ENCODE measurements at regions of chr3 and their contacts with region 1.

Region 1: DNA sequence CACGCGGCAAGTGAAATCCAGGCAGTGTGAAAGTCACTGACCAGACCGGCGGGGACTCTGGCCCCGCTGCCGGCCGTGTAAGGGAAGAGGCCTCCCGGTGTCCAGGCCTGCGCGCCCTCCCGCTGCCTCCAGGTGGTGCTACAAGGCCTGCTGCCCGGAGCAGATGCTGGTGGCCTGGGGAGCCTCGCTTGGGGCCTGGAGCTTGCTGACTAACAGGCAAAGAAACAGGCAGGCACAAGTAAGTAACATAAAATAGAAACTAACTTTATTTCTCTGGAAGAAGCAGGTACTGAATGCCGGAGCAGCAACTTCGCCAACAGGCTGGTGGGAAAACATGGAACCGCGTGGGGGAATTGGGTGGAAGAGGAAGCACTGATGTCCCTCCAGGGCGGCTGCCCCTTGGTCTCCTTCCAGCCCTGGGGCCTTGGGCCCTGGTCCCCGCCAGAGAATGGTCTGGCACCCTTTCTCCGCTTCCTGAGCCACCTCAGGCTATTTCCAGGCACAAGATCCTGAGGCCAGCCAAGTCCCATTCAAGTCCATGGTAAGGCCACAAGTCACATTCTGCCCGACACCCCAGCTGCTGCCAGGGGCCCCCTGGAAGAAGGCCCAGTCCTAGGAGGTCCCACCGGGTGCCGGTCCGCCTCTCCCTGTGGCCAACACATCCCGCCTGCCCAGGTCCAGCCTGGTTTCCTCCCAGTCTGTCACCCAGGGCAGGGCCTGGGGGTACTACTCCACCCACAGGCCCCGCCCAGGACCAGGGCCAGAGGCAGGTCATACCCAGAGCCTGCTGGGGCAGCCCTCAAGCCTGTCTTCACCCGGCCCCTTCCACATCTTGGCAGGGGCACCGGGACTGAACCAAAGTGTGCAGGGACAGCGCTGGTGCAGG is 45.0 kb downstream of the TNK2 start:
- DNase-seq: peak; percentile 60
- ATAC-seq: peak; percentile 98
- H3K4me3 ChIP-seq: no peak overlapping the region
- H3K27ac ChIP-seq: no peak overlapping the region
- H3K4me1 ChIP-seq: peaks cover 4% of the 10 kb centered on the region; the same call in 1 of the 2 replicates
- H3K27me3 ChIP-seq: peaks cover 0 to 25% of the 10 kb centered on the region in 2 experiments
- CTCF ChIP-seq: peak; percentile 97
- EP300 ChIP-seq: no peak
- POLR2A ChIP-seq: no peak
- RAD21 ChIP-seq: peak; percentile 96

Region 2: DNA sequence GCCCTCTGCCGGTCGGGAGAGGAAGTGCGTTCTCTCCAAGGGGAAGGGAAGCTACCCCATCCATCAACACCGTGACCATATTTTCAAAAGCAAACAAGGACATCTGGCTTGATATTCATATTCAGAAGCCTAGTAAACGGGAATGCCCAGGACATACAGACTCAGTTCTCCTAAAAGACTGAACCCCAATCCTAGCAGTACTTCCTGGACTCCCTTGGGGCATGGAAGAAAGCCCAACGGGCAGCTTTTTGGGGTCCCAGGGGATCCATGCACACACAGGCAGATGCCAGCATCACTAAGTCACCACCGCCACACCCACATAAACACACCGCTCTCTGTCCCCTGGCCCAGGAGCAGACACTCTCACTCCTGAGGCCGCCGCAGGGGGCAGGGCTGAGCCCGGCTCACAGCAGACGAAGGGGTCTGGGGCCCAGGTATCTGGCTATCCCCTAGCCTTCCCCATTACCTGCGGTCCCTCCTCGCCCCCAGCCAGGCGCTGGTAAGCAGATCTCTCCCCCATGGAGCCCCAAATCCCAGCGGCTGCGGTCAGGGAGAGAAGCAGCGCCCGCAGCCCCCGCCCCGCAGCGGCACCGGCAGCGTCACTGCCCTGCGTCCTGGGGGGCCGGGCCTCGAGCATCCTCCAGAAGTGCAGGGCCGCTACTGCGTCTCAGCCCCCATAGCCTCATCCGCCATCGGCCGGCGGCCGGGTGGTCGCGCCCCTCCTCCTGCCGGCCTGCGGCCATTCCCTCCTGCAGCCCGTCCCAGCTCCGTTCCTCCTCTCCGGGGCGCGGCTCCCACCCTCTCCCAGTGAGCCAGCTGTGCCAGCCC is 31.6 kb after region 1 on chr3:
- CTCF ChIA-PET with region 1: interaction called, 81 read pairs
- POLR2A ChIA-PET with region 1: interaction called, 4 read pairs
- in situ Hi-C with region 1: loop called (anchors 5 kb)
- intact Hi-C with region 1: loop called (anchors 1 kb)
- DNase-seq: peak; percentile 72
- ATAC-seq: peak; percentile 68
- H3K4me3 ChIP-seq: peak overlapping the region; percentile 51 to 78 (median 69)
- H3K27ac ChIP-seq: no peak overlapping the region
- H3K4me1 ChIP-seq: peaks cover 65% of the 10 kb centered on the region
- H3K27me3 ChIP-seq: 0 out of 5 replicates have a peak, but pooled peaks cover 0 to 8% of the 10 kb centered on the region in 2 experiments
- CTCF ChIP-seq: peak; percentile 90
- EP300 ChIP-seq: no peak
- POLR2A ChIP-seq: no peak
- RAD21 ChIP-seq: peak; percentile 73; the same call in 1 of the 2 replicates

Region 3: GRCh38 chr3:196995646-196996371 is 1132.4 kb after region 1 on chr3:
- CTCF ChIA-PET with region 1: no interaction called
- POLR2A ChIA-PET with region 1: no interaction called
- in situ Hi-C with region 1: no loop called
- intact Hi-C with region 1: no loop called
- DNase-seq: no peak
- ATAC-seq: peak; percentile 40
- H3K4me3 ChIP-seq: peak overlapping the region in 1 of 3 experiments; percentile 13; a peak in 1 of 6 replicates
- H3K27ac ChIP-seq: no peak overlapping the region
- H3K4me1 ChIP-seq: peaks cover 51% of the 10 kb centered on the region
- H3K27me3 ChIP-seq: no peaks in the 10 kb centered on the region
- CTCF ChIP-seq: no peak
- EP300 ChIP-seq: no peak
- POLR2A ChIP-seq: no peak
- RAD21 ChIP-seq: no peak